CD8-positive, alpha-beta T cell (primary cell): ENCODE measurements at regions of chr12 and their contacts with region 1.

Region 1: DNA sequence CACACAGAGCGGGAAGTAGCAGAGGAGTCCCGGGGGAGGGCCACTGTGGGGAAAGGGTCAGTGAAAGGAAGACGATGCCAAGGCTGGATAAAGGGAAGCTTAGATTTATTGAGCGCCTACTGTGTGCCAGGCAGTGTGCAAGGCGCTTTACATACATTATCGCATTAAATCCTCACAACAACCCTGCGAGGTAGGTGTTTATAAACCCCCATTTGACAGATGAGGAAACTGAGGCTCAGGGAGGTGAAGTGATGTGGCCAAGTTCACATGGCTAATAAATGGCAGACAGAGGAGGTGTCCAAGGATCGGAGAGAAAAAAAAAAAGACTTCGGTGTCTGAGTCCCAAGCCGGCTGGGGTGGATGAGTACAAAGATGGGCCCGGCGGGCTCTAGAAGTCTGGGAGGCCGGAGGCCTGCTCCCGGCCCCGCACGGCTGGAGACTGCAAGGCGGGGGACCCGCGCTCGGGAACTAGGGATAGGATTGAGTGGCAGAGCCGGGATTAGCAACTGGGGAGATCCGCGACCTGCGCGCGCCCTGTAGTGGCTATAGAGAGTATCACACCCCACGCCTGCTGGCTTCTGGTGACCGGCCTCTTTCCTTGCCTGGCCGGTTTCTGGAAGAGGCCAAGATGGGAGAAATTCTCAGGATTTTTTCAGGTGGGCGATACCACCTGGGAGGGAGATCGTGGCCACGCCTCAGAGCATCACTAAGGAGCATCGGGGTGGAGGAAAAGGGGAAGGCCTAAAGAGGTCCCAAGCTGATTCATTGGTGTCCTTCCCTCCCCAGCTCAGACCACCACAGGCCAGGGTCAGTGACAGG is 3.9 kb downstream of the DDN start:
- DNase-seq: peak in 6 of 9 experiments; percentile 53 to 70 (median 63)
- ATAC-seq: no peak
- H3K4me3 ChIP-seq: no peak overlapping the region
- H3K4me3 Mint-ChIP-seq: peak overlapping the region; percentile 49
- H3K27ac ChIP-seq: no peak overlapping the region
- H3K27ac Mint-ChIP-seq: no peak overlapping the region
- H3K4me1 ChIP-seq: peaks cover 39% of the 10 kb centered on the region
- H3K4me1 Mint-ChIP-seq: peaks cover 32% of the 10 kb centered on the region
- H3K27me3 ChIP-seq: peaks cover 32 to 41% of the 10 kb centered on the region in 2 experiments
- H3K27me3 Mint-ChIP-seq: peaks cover 53% of the 10 kb centered on the region
- CTCF ChIP-seq: peak; percentile 79

Region 2: DNA sequence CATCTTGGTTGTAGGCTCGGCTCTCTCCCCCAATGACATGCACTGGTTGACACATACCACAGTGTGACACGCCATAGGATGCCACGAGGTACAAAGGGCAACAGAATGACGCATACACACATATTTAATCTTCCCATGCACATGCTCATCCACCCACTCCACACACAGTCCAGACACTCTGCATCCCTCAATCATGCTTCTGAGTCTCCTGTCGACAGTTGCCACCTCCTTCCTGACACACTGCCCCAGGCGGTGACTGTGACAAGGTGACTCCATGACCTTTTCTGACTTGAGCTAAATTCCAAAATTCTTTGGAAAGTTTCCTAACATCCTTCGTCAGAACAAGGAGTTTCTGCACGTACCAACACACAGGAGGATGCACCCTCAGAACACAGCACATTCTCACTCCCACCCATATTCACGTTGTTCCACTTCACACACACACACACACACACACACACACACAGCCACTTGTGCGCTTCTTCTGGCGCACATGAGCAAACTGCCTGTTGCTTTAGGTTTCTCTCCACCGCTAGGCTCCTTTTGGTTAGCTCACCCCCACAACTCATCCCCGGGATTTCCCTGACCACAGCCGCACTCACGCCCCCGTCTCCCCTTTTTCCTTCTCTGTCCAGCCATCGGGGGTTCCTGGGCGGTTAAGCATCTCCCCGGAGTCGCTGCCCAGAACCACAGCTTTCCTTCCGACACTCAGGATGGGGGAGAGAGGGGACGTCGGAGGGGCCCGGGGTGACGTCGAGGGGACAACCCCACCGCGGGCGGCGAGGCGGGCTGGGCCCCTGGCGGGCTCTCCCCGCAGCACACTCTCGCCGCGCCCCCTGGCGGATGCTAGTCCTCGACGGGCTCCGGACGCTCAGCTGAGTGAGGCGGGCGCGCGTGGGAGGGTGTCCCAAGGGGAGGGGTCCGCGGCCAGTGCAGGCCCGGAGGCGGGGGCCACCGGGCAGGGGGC is 17.7 kb before region 1 on chr12:
- CTCF ChIA-PET with region 1: interaction called, 36 read pairs
- POLR2A ChIA-PET with region 1: interaction called, 5 read pairs
- intact Hi-C with region 1: loop called in 1 of 2 experiments (anchors 1 kb)
- DNase-seq: peak; percentile 59 to 92 (median 84)
- ATAC-seq: peak; percentile 55
- H3K4me3 ChIP-seq: peak overlapping the region; percentile 60 to 77
- H3K4me3 Mint-ChIP-seq: peak overlapping the region; percentile 63
- H3K27ac ChIP-seq: no peak overlapping the region
- H3K27ac Mint-ChIP-seq: peak overlapping the region; percentile 76
- H3K4me1 ChIP-seq: peaks cover 44% of the 10 kb centered on the region
- H3K4me1 Mint-ChIP-seq: peaks cover 46% of the 10 kb centered on the region
- H3K27me3 ChIP-seq: peaks cover 14% of the 10 kb centered on the region in 2 experiments
- H3K27me3 Mint-ChIP-seq: peaks cover 28% of the 10 kb centered on the region
- CTCF ChIP-seq: peak; percentile 92

Region 3: GRCh38 chr12:49043856-49044258 is 48.6 kb after region 1 on chr12:
- CTCF ChIA-PET with region 1: interaction called, 4 read pairs
- POLR2A ChIA-PET with region 1: no interaction called
- intact Hi-C with region 1: loop called (anchors 1 to 2 kb)
- DNase-seq: peak; percentile 67 to 90 (median 84)
- ATAC-seq: peak; percentile 87
- H3K4me3 ChIP-seq: no peak overlapping the region
- H3K4me3 Mint-ChIP-seq: no peak overlapping the region
- H3K27ac ChIP-seq: peak overlapping the region; percentile 29 to 55
- H3K27ac Mint-ChIP-seq: peak overlapping the region; percentile 24
- H3K4me1 ChIP-seq: no peaks in the 10 kb centered on the region
- H3K4me1 Mint-ChIP-seq: peaks cover 10% of the 10 kb centered on the region
- H3K27me3 ChIP-seq: no peaks in the 10 kb centered on the region
- H3K27me3 Mint-ChIP-seq: no peaks in the 10 kb centered on the region
- CTCF ChIP-seq: peak; percentile 77